HEK293T (cell line): ENCODE measurements at regions of chr19 and their contacts with region 1.

Region 1: GRCh38 chr19:4851551-4852290 is 15.7 kb downstream of the PLIN3 start:
- DNase-seq: peak; percentile 78

Region 2: GRCh38 chr19:4815426-4816201 is 36.1 kb before region 1 on chr19:
- CTCF ChIA-PET with region 1: interaction called, 34 read pairs
- POLR2A ChIA-PET with region 1: interaction called, 3 read pairs
- DNase-seq: peak; percentile 94